ENCODE measurements at regions of chr14 and their contacts with region 1.

Region 1: DNA sequence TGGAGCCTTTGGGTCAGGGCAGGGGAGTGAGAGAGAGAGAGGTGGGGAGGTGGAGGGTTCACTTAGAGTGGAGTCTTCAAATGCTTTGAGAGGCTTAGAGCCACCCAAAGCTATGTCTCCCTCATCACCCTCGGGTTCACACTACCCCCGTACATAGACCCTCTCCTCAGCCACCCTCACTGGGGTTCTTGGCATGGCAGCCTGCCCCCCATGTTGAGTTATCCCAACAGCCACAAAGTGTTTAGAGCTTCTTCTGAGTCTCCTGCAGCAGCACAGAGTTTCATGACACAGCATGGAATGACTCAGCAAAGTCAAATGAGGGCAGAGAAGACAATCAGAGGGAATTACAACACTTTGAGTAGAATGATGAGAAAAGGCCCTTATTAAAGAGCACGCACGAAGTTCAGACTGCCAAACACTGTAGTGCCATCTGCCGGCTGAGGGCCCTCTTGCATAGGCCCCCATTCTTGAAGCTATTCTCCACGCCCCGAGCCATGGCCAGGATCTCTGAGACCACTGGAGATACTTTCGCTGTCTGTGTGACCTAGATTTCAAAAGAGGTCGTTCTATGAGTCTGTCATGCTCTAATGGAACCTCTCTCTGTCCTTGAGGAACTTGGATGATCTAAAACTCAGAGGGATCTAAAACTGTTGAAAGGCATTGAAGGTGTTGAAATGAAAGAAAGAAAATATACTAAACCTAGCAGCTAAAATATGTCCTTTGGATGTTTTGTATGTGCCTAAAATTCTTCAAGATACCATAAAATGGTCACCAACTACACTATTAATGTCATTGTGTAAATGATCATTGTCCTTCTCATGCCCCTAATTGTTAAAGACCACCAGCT is 221.9 kb downstream of the PELI2 start:
- DNase-seq: peak; percentile 68 to 78
- H3K4me3 ChIP-seq: no peak overlapping the region
- H3K27ac ChIP-seq: peak overlapping the region; percentile 33; the same call in 1 of the 2 replicates
- H3K4me1 ChIP-seq: peaks cover 7% of the 10 kb centered on the region
- H3K27me3 ChIP-seq: no peaks in the 10 kb centered on the region
- CTCF ChIP-seq: peak; percentile 81

Region 2: GRCh38 chr14:55438066-55438683 is 901.9 kb before region 1 on chr14:
- CTCF ChIA-PET with region 1: interaction called, 3 read pairs
- POLR2A ChIA-PET with region 1: interaction called, 4 read pairs
- intact Hi-C with region 1: loop called (anchors 1 kb)
- DNase-seq: peak in 1 of 2 experiments; percentile 66
- H3K4me3 ChIP-seq: no peak overlapping the region
- H3K27ac ChIP-seq: no peak overlapping the region
- H3K4me1 ChIP-seq: peaks cover 20% of the 10 kb centered on the region
- H3K27me3 ChIP-seq: no peaks in the 10 kb centered on the region
- CTCF ChIP-seq: peak; percentile 76

Region 3: DNA sequence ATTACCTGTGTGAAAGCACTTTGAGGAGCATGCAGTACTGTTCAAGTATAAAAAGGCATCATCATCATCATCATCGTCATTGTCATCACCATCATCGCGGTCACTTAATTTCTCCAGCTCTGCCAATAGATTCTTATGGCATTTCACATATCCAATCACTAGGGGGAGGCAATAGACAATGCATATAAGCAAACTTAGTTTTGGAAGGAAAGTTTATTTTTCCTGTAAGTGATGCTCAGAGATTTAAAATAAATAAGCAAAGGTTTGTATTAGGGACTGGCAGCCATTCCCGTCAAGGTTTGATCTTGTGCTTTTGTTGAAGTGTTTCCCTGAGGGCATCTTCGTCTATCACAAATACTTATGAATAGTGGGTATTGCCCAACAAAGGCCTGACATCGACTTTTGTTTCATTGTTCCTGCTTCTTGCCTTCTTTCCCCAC is 632.7 kb before region 1 on chr14:
- CTCF ChIA-PET with region 1: no interaction called
- POLR2A ChIA-PET with region 1: no interaction called
- intact Hi-C with region 1: loop called (anchors 1 kb)
- DNase-seq: peak in 1 of 2 experiments; percentile 60
- H3K4me3 ChIP-seq: no peak overlapping the region
- H3K27ac ChIP-seq: no peak overlapping the region
- H3K4me1 ChIP-seq: no peaks in the 10 kb centered on the region
- H3K27me3 ChIP-seq: no peaks in the 10 kb centered on the region
- CTCF ChIP-seq: peak; percentile 81

Region 4: GRCh38 chr14:56117765-56118610 is 222.1 kb before region 1 on chr14 and contains the start of gene PELI2:
- CTCF ChIA-PET with region 1: no interaction called
- POLR2A ChIA-PET with region 1: no interaction called
- intact Hi-C with region 1: loop called (anchors 2 kb)
- DNase-seq: peak; percentile 42 to 78
- H3K4me3 ChIP-seq: peak within 1 kb of the TSS; percentile 71
- H3K27ac ChIP-seq: no peak within 1 kb of the TSS
- H3K4me1 ChIP-seq: no peaks in the 10 kb centered on the region
- H3K27me3 ChIP-seq: peaks cover 30% of the 10 kb centered on the region
- CTCF ChIP-seq: no peak
- total RNA-seq, gene PELI2: 7.9 and 10.0 TPM in 2 replicates

Region 5: DNA sequence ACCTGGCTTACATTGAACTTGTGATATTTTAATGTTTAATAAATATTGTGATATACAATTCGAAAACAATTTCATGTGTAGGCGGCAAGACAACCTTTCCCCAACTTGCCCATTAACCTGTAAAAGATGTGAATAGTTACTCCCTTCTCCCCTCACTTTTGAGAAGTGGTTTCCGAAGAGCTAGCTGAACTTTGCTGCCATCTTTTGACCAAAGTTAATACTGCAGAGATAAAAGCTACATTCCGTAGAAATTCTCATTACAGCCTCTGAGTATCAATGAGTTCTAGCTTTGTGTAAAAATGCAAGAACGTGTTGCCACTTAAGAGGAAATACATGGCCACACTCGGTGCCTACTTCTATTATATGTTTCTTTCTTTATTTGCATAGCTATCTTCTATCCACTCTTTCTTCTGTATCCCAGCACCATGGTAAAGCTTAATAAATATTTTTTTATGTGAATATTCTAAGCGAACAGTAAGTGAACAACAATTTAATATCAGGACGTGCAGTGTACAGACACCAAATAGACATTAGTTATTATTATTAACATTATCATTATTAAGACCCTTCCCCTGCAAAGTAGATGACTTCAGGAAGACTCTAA is 134.4 kb after region 1 on chr14:
- CTCF ChIA-PET with region 1: no interaction called
- POLR2A ChIA-PET with region 1: no interaction called
- intact Hi-C with region 1: loop called (anchors 2 kb)
- DNase-seq: peak in 1 of 2 experiments; percentile 37
- H3K4me3 ChIP-seq: no peak overlapping the region
- H3K27ac ChIP-seq: no peak overlapping the region
- H3K4me1 ChIP-seq: no peaks in the 10 kb centered on the region
- H3K27me3 ChIP-seq: no peaks in the 10 kb centered on the region
- CTCF ChIP-seq: peak; percentile 83

Measured in PC-9 (cell line).